AG04450 (cell line): ENCODE measurements at regions of chr2 and their contacts with region 1.

Region 1: GRCh38 chr2:38959938-38960608 is 70.4 kb downstream of the ARHGEF33 start:
- DNase-seq: peak; percentile 67
- H3K4me3 ChIP-seq: peak overlapping the region; percentile 57
- H3K27ac ChIP-seq: no peak overlapping the region
- H3K27me3 ChIP-seq: peaks cover 8% of the 10 kb centered on the region
- CTCF ChIP-seq: peak; percentile 11; the same call in 1 of the 2 replicates

Region 2: DNA sequence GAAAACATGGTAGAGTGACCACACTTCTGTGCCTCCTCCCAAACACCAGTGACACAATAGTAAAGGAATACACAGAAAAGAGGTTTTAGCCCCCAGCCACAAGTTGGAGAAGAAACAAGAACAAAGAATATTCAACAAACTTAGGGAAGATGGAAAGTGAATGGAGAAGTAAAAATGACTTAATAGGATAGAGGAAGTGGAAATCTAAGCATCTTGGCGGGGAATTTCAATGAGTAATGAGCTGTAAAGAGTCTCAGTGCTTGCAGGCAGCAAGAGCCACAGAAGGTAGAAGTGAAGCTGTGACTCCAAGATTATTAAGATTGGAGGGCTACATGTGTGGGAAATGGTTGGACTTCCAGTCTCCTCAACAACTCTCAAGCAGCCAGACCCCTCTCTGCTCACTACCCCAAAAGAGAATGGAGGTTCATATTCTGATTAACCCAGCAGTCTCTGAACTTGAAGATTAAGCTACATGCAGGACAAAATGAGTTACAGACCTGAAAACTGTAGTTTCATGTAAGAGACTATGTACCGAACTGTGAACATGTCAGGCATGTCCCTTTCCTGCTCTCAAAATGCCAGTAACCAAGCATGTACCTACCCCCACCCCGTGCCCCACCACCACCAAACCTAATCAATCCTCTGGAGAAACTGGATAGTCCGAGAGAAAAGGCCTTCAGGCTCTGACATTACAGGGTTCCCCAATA is 340.5 kb before region 1 on chr2:
- CTCF ChIA-PET with region 1: no interaction called
- POLR2A ChIA-PET with region 1: no interaction called
- DNase-seq: no peak
- H3K4me3 ChIP-seq: no peak overlapping the region
- H3K27ac ChIP-seq: no peak overlapping the region
- H3K27me3 ChIP-seq: no peaks in the 10 kb centered on the region
- CTCF ChIP-seq: no peak

Region 3: GRCh38 chr2:38997781-38998180 is 37.7 kb after region 1 on chr2:
- CTCF ChIA-PET with region 1: interaction called, 10 read pairs
- POLR2A ChIA-PET with region 1: no interaction called
- DNase-seq: peak; percentile 88
- H3K4me3 ChIP-seq: no peak overlapping the region
- H3K27ac ChIP-seq: peak overlapping the region; percentile 47
- H3K27me3 ChIP-seq: no peaks in the 10 kb centered on the region
- CTCF ChIP-seq: no peak